HEK293 (cell line): ENCODE measurements at regions of chr5 and their contacts with region 1.

Region 1: GRCh38 chr5:132293066-132293991 is 865 bp upstream of the SLC22A4 start:
- H3K4me3 ChIP-seq: peak overlapping the region; percentile 41
- H3K27ac ChIP-seq: peak overlapping the region; percentile 96
- H3K4me1 ChIP-seq: peaks cover 4% of the 10 kb centered on the region; the same call in 1 of the 2 replicates
- CTCF ChIP-seq: peak; percentile 91

Region 2: GRCh38 chr5:132012371-132013005 is 280.8 kb before region 1 on chr5:
- CTCF ChIA-PET with region 1: no interaction called
- POLR2A ChIA-PET with region 1: no interaction called
- H3K4me3 ChIP-seq: no peak overlapping the region
- H3K27ac ChIP-seq: no peak overlapping the region
- H3K4me1 ChIP-seq: no peaks in the 10 kb centered on the region; the same call in 1 of the 2 replicates
- CTCF ChIP-seq: no peak

Region 3: GRCh38 chr5:132215329-132215728 is 78.0 kb before region 1 on chr5:
- CTCF ChIA-PET with region 1: no interaction called
- POLR2A ChIA-PET with region 1: interaction called, 13 read pairs
- H3K4me3 ChIP-seq: no peak overlapping the region
- H3K27ac ChIP-seq: no peak overlapping the region
- H3K4me1 ChIP-seq: 0 out of 2 replicates have a peak, but pooled peaks cover 2% of the 10 kb centered on the region
- CTCF ChIP-seq: no peak

Region 4: DNA sequence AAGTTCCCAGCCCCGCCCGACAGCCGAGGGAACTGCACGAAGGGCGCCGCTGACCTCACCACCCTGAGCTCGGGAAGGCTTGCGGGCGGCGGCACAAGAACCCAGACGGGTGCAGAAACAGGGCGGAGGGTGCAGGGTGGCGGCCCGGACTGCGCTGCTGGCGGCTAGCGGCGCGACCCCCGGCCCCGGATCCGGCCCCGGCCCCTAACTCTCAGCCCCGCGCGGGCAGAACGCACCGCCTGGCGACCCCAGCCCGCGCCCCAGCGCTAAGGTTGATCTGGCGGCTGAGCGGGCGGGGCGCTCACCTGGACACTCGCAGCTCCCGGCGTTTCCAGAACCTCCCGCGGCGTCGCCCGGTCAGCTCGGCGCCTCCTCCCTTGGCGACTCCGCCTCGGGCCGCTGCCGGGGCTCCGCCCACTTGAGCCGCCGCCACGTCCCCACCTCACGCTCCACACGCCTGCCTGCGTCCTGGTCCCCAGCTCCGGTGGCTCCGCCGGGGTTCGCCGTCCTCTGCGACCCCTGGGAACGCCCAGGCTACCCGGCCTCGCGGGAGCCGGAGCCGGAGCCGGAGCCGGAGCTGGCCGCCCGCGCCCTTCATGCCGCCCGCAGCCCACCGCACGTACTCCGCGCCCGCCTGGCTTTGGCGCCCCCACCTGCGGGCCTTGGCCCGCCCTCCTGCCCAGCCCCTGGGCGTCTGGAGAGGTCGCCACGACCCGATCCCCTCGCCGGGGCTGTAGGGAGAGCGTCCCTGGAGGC is 65.7 kb before region 1 on chr5 and contains the start of gene P4HA2:
- CTCF ChIA-PET with region 1: no interaction called
- POLR2A ChIA-PET with region 1: interaction called, 30 read pairs
- H3K4me3 ChIP-seq: peak within 1 kb of the TSS; percentile 58
- H3K27ac ChIP-seq: peak within 1 kb of the TSS; percentile 57; the same call in 1 of the 2 replicates
- H3K4me1 ChIP-seq: peaks cover 4% of the 10 kb centered on the region
- CTCF ChIP-seq: no peak; the same call in none of the 2 replicates

Region 5: DNA sequence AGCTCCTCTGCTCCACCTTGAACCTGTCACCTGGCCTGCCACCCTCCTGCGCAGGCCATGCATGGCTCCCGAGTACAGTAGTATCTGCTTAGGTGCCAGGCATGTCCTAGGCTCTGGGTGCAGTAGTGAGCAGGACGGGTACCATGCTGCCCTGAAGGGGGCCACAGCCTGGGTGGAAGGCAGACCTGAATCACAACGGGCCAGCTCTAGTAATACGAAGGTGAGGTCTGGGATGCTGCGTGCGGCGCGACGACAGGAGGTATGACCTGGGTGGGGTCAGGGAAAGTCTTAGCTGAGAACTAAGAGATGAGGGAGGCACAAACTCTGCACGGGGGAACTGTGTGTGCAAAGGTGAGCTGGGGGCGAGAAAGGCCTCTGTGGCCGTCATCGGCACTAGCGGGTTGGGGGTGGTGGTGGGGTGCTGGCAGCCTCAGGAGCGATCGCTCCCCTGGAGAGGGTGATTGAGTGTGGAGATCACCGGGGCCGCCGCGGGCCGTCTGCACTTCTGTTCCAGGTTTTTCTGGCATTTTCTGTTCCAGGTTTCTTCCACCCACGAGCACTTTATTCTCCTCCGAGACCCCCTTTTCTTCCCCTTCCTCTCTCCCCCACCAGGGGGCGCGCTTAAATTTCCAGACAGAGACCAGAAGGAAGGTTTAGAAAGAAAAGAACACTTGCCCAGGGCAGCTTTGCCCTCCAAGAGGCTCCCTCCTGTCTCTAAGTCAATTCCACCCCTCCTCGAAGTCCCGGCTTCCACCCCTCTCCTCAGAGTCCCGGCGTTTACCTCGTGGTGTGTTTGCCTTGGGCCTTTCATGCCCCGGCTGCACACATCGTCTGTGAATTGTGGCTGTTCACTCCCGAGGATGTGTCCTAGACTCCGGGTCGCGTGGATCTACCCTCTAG is 20.8 kb before region 1 on chr5:
- CTCF ChIA-PET with region 1: interaction called, 8 read pairs
- POLR2A ChIA-PET with region 1: interaction called, 10 read pairs
- H3K4me3 ChIP-seq: no peak overlapping the region
- H3K27ac ChIP-seq: no peak overlapping the region
- H3K4me1 ChIP-seq: no peaks in the 10 kb centered on the region
- CTCF ChIP-seq: peak; percentile 26; the same call in 1 of the 2 replicates

Region 6: GRCh38 chr5:132369474-132370180 is 76.3 kb after region 1 on chr5 and contains the start of gene SLC22A5:
- CTCF ChIA-PET with region 1: interaction called, 16 read pairs
- POLR2A ChIA-PET with region 1: interaction called, 52 read pairs
- H3K4me3 ChIP-seq: peak within 1 kb of the TSS; percentile 78
- H3K27ac ChIP-seq: peak within 1 kb of the TSS; percentile 65
- H3K4me1 ChIP-seq: no peaks in the 10 kb centered on the region
- CTCF ChIP-seq: no peak

Region 7: GRCh38 chr5:132490486-132491367 is 197.4 kb after region 1 on chr5 and contains the start of gene IRF1:
- CTCF ChIA-PET with region 1: no interaction called
- POLR2A ChIA-PET with region 1: interaction called, 20 read pairs
- H3K4me3 ChIP-seq: peak within 1 kb of the TSS; percentile 73
- H3K27ac ChIP-seq: peak within 1 kb of the TSS; percentile 79; the same call in 1 of the 2 replicates
- H3K4me1 ChIP-seq: peaks cover 6% of the 10 kb centered on the region
- CTCF ChIP-seq: peak; percentile 58

Region 8: DNA sequence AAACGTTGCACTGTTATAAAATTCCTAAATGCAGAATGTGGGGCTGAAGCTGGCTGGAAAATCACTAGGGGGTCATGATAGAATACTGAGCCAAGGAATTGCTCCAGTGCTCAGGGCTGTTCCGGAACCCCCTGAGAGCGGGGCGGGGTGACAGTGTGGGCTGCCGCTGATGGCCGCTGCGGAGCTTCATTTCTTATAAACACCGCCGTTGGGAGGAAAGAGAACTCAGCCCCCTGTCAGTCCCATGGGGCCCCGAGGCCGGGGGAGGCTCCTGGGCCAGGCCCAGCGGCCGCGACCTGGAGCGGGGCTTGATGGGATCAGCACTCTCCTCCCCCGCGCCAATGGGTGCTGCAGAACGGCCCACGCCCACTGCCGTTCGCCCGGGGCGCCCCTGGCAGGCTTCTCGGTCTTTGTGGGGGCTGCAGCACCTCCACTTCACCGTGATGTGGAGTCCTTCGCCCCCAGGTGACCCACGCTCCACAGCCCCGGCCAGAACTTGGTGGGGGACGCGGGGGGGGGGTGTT is 202.4 kb after region 1 on chr5:
- CTCF ChIA-PET with region 1: interaction called, 8 read pairs
- POLR2A ChIA-PET with region 1: interaction called, 20 read pairs
- H3K4me3 ChIP-seq: peak overlapping the region; percentile 54
- H3K27ac ChIP-seq: peak overlapping the region; percentile 66; the same call in 1 of the 2 replicates
- H3K4me1 ChIP-seq: peaks cover 6% of the 10 kb centered on the region
- CTCF ChIP-seq: peak; percentile 36; the same call in 1 of the 2 replicates